Lower leg skin (tissue), 4 donors: ENCODE measurements at regions of chr5 and their contacts with region 1.

Region 1: DNA sequence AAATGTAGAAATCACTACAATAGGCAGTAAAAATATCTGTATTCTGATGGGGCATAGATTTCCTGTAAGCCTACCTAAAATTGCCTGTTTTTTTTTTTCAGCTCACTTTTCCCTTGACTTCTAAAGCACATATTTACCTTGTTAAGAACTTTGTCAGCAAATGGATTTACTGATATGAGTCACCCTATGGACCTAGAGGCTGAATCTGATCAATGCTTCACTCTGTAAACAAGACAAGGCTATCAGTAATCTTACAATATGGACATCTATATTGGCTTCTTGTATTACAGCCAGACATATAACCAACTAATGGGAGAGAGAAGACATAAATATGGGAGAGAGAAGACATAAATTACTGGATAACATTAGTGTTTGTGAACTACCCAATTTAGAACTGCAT is 792.7 kb upstream of the CHD1 start:
- DNase-seq: no peak
- H3K4me3 ChIP-seq: no peak overlapping the region
- CTCF ChIP-seq: no peak
- POLR2A ChIP-seq: no peak

Region 2: GRCh38 chr5:98638701-98639100 is 1082.8 kb before region 1 on chr5:
- intact Hi-C with region 1: no loop called
- DNase-seq: no peak
- H3K4me3 ChIP-seq: no peak overlapping the region
- CTCF ChIP-seq: no peak
- POLR2A ChIP-seq: no peak

Region 3: GRCh38 chr5:99747342-99747741 is 25.8 kb after region 1 on chr5:
- intact Hi-C with region 1: loop called (anchors 2 kb)
- DNase-seq: no peak
- H3K4me3 ChIP-seq: no peak overlapping the region
- CTCF ChIP-seq: no peak
- POLR2A ChIP-seq: no peak